Ovary (tissue), 10 donors: ENCODE measurements at regions of chrX and their contacts with region 1.

Region 1: GRCh38 chrX:55717521-55718497 is at the start of gene RRAGB:
- DNase-seq: peak; percentile 91 to 94 (median 93)
- H3K4me3 ChIP-seq: peak within 1 kb of the TSS; percentile 55
- H3K27ac ChIP-seq: peak within 1 kb of the TSS; percentile 41 to 75
- H3K4me1 ChIP-seq: no peaks in the 10 kb centered on the region
- H3K27me3 ChIP-seq: no peaks in the 10 kb centered on the region
- CTCF ChIP-seq: peak; percentile 38 to 57 (median 51)
- EP300 ChIP-seq: no peak
- POLR2A ChIP-seq: peak; percentile 40
- total RNA-seq, gene RRAGB: 17.7 to 28.3 (median 25.4) TPM

Region 2: GRCh38 chrX:54447461-54447860 is 1270.3 kb before region 1 on chrX:
- intact Hi-C with region 1: no loop called
- DNase-seq: no peak
- H3K4me3 ChIP-seq: no peak overlapping the region
- H3K27ac ChIP-seq: no peak overlapping the region
- H3K4me1 ChIP-seq: no peaks in the 10 kb centered on the region
- H3K27me3 ChIP-seq: no peaks in the 10 kb centered on the region
- CTCF ChIP-seq: no peak
- EP300 ChIP-seq: no peak
- POLR2A ChIP-seq: no peak

Region 3: DNA sequence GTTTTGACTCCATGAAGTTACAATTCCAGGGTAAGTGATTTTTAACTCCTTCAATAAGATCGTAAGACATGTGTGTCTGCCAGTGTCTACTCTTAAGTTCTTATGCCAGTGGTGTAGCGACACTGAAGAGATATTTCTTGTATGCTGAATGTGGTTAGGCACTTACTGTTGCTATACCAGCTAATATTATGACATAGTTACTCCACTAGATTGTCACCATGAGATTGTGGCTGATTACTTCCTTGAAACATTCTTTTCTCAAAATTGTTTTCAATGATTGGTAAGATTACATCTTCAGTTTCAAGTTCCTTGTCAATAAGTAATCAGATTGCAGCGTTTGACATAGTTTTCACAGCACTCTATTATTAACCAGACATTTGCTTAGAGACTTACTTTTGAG is 558.3 kb before region 1 on chrX:
- intact Hi-C with region 1: loop called in 1 of 4 experiments (anchors 10 kb)
- DNase-seq: no peak
- H3K4me3 ChIP-seq: no peak overlapping the region
- H3K27ac ChIP-seq: no peak overlapping the region
- H3K4me1 ChIP-seq: no peaks in the 10 kb centered on the region
- H3K27me3 ChIP-seq: no peaks in the 10 kb centered on the region
- CTCF ChIP-seq: no peak
- EP300 ChIP-seq: no peak
- POLR2A ChIP-seq: no peak

Region 4: DNA sequence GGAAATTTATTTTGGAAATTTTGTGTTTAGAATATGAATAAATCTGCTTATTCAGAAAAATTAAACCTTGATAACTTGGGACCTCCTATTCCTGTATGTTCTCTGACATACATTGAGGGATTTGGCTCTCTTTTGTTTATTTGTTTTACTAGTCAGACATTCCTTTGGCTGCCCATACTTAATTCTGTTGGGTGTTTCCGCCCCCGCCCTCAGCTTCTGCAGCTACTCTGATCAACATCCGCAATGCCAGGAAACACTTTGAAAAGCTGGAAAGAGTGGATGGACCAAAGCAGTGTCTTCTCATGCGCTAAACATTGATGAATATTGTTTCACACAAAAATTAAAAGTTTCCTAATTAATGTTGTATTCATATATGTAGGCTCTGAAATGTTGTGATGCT is 40.2 kb after region 1 on chrX:
- intact Hi-C with region 1: loop called in 1 of 4 experiments (anchors 1 kb)
- DNase-seq: no peak
- H3K4me3 ChIP-seq: no peak overlapping the region
- H3K27ac ChIP-seq: no peak overlapping the region
- H3K4me1 ChIP-seq: no peaks in the 10 kb centered on the region
- H3K27me3 ChIP-seq: no peaks in the 10 kb centered on the region
- CTCF ChIP-seq: no peak
- EP300 ChIP-seq: no peak
- POLR2A ChIP-seq: no peak

Region 5: DNA sequence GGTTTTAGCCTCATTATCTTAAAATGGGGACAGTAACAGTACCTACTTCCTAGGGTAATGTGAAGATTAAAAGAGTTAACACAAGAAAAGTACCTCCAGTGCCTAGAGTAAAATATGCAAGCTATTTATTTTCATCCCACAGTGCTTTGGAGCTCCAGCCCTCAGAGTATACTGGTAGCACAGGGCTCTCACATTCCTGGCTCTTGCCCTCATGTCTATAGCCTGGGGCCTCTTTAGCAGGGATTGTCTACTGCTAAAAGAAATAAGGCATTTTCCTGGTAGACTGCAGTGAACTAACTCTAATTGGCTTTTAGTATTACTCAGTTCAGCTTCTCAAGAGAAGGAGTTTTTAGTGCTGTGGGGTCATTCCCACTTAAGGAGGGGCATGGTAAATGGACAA is 60.5 kb after region 1 on chrX:
- intact Hi-C with region 1: no loop called
- DNase-seq: no peak
- H3K4me3 ChIP-seq: no peak overlapping the region
- H3K27ac ChIP-seq: no peak overlapping the region
- H3K4me1 ChIP-seq: no peaks in the 10 kb centered on the region
- H3K27me3 ChIP-seq: no peaks in the 10 kb centered on the region
- CTCF ChIP-seq: no peak
- EP300 ChIP-seq: no peak
- POLR2A ChIP-seq: no peak

Region 6: GRCh38 chrX:56232221-56233082 is 514.6 kb after region 1 on chrX and contains the start of gene KLF8:
- intact Hi-C with region 1: loop called in 1 of 4 experiments (anchors 10 kb)
- DNase-seq: peak; percentile 54 to 69 (median 62)
- H3K4me3 ChIP-seq: peak within 1 kb of the TSS; percentile 53
- H3K27ac ChIP-seq: peak within 1 kb of the TSS; percentile 64 to 80
- H3K4me1 ChIP-seq: peaks cover 2% of the 10 kb centered on the region
- H3K27me3 ChIP-seq: no peaks in the 10 kb centered on the region
- CTCF ChIP-seq: no peak
- EP300 ChIP-seq: no peak
- POLR2A ChIP-seq: peak; percentile 42
- total RNA-seq, gene KLF8: 10.3 to 25.1 (median 13.6) TPM